ENCODE measurements at regions of chr22 and their contacts with region 1.

Region 1: GRCh38 chr22:36180038-36180880 is 19.7 kb upstream of the APOL3 start:
- DNase-seq: peak; percentile 76 to 94 (median 85)
- ATAC-seq: peak; percentile 100
- H3K4me3 ChIP-seq: no peak overlapping the region
- H3K4me3 Mint-ChIP-seq: no peak overlapping the region
- H3K27ac ChIP-seq: no peak overlapping the region
- H3K27ac Mint-ChIP-seq: no peak overlapping the region
- H3K4me1 ChIP-seq: peaks cover 7% of the 10 kb centered on the region
- H3K4me1 Mint-ChIP-seq: peaks cover 6% of the 10 kb centered on the region
- H3K27me3 ChIP-seq: peaks cover 0 to 2% of the 10 kb centered on the region in 2 experiments
- H3K27me3 Mint-ChIP-seq: no peaks in the 10 kb centered on the region
- CTCF ChIP-seq: peak; percentile 81

Region 2: DNA sequence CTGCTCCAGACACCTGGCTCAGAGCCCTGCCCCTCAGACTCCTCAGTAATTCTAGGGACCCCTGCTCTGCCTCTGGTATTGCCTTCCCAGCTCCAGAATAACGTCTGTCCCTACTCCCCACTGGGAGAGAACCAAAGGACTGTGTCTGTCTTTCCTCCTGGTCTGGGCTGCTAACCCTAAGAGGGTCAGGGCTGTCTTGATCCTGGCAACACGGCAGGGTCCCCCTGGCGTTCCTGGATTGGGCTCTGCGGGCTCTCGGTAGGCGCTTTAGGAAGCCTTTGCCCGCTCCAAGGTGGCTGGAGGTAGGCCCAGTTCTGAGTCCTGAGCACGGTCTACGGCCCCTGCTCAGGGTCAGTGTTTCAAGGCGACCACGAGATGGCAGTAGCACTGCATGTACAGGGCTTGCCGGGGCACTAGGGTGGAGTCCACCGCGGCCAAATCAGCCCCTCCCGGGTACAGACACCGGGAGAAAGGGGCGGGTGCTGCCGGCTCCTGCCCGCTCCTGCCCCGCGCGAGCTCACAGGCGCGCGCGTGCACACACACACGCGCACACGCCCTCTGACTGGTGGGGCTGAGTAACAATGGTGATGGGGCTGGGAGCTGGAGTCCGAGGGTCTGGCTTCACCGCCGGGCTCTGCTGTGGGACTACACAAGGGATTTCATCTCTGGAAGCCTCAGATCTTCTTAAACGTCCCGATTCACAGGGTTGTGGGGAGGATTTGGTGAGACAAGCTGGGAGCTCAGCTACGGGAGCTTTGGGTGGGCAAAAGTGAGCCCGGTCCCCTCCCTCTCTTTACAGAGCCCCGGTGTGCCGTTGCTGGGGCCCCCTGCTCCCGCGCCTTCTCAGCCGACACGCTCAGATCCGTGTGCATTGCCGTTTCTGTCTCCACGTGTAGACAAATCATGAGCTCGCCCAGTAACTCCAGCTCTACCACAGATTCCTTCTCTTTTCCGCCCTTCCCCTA is 829.4 kb before region 1 on chr22:
- CTCF ChIA-PET with region 1: no interaction called
- POLR2A ChIA-PET with region 1: no interaction called
- intact Hi-C with region 1: loop called in 1 of 2 experiments (anchors 2 kb)
- DNase-seq: peak; percentile 69 to 93 (median 79)
- ATAC-seq: peak; percentile 81
- H3K4me3 ChIP-seq: peak overlapping the region; percentile 55
- H3K4me3 Mint-ChIP-seq: peak overlapping the region; percentile 80
- H3K27ac ChIP-seq: no peak overlapping the region
- H3K27ac Mint-ChIP-seq: peak overlapping the region; percentile 43
- H3K4me1 ChIP-seq: peaks cover 31% of the 10 kb centered on the region
- H3K4me1 Mint-ChIP-seq: peaks cover 25% of the 10 kb centered on the region
- H3K27me3 ChIP-seq: no peaks in the 10 kb centered on the region
- H3K27me3 Mint-ChIP-seq: peaks cover 12% of the 10 kb centered on the region
- CTCF ChIP-seq: peak; percentile 84

Region 3: GRCh38 chr22:36065775-36066559 is 114.3 kb before region 1 on chr22:
- CTCF ChIA-PET with region 1: interaction called, 15 read pairs
- POLR2A ChIA-PET with region 1: no interaction called
- intact Hi-C with region 1: loop called (anchors 1 to 2 kb)
- DNase-seq: peak; percentile 34 to 79 (median 52)
- ATAC-seq: peak; percentile 86
- H3K4me3 ChIP-seq: peak overlapping the region; percentile 50
- H3K4me3 Mint-ChIP-seq: peak overlapping the region; percentile 85
- H3K27ac ChIP-seq: no peak overlapping the region
- H3K27ac Mint-ChIP-seq: no peak overlapping the region
- H3K4me1 ChIP-seq: peaks cover 17% of the 10 kb centered on the region
- H3K4me1 Mint-ChIP-seq: peaks cover 5% of the 10 kb centered on the region
- H3K27me3 ChIP-seq: no peaks in the 10 kb centered on the region
- H3K27me3 Mint-ChIP-seq: no peaks in the 10 kb centered on the region
- CTCF ChIP-seq: peak; percentile 100

Region 4: DNA sequence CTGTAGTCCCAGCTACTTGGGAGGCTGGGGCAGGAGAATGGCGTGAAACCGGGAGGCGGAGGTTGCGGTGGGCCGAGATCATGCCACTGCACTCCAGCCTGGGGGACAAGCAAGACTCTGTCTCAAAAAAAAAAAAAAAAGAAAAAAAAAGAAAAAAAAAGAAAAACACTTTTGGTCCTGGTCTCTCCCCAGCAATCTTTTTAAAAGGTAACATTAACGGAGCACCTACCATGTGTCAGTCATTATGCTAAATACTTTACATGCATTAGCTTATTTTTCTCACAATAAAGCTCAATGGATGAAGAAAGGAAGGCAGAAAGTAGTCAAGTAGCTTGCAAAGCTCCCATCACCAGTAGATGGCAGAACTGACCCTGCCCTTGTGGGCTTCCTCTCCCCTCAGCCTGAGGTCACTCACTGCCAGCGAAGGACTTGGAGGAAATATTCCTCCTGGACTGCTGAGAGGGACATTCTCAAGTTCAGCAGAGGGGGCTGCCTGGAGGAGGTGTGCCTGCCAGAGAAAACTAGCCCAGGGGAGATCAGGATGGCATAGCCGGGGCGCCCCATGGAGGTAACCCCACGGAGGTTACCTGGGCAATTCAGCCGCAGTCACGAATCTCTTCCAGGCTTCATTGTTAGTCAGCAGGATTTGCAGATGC is 35.2 kb before region 1 on chr22:
- CTCF ChIA-PET with region 1: interaction called, 8 read pairs
- POLR2A ChIA-PET with region 1: no interaction called
- intact Hi-C with region 1: loop called (anchors 1 kb)
- DNase-seq: peak in 5 of 14 experiments; percentile 34 to 70 (median 47)
- ATAC-seq: peak; percentile 62
- H3K4me3 ChIP-seq: no peak overlapping the region
- H3K4me3 Mint-ChIP-seq: no peak overlapping the region
- H3K27ac ChIP-seq: no peak overlapping the region
- H3K27ac Mint-ChIP-seq: peak overlapping the region; percentile 64
- H3K4me1 ChIP-seq: peaks cover 21% of the 10 kb centered on the region
- H3K4me1 Mint-ChIP-seq: peaks cover 27% of the 10 kb centered on the region
- H3K27me3 ChIP-seq: no peaks in the 10 kb centered on the region
- H3K27me3 Mint-ChIP-seq: no peaks in the 10 kb centered on the region
- CTCF ChIP-seq: peak; percentile 51

Region 5: DNA sequence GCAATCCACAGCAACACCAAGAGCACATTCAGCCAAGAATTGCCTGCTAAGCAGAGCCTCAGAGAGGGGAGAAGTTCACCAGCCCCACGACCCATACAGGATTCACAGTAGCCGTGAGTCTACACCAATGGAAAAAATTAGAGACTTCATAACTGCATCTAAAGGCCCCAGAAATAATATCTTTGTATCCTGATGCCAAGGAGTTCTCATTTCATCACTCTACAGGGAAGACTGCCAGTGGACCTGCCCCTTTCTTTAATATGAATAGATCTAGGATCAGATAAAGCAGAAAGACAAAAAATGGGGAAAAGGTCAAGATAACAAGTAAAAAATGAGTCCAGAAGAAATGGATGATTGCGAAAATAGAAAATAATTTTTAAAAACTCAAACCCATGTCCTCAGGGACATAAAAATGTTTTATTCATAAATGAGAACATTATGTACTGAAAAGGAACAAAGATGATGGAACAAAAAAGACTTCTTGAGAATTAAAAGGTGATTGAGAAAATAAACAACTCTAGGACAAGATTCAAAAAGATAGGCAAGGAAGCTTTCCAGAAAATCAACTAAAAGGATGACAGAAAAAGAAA is 29.2 kb before region 1 on chr22:
- CTCF ChIA-PET with region 1: interaction called, 12 read pairs
- POLR2A ChIA-PET with region 1: no interaction called
- intact Hi-C with region 1: no loop called
- DNase-seq: no peak
- ATAC-seq: no peak
- H3K4me3 ChIP-seq: no peak overlapping the region
- H3K4me3 Mint-ChIP-seq: peak overlapping the region; percentile 8
- H3K27ac ChIP-seq: no peak overlapping the region
- H3K27ac Mint-ChIP-seq: peak overlapping the region; percentile 92
- H3K4me1 ChIP-seq: peaks cover 65% of the 10 kb centered on the region
- H3K4me1 Mint-ChIP-seq: peaks cover 69% of the 10 kb centered on the region
- H3K27me3 ChIP-seq: no peaks in the 10 kb centered on the region
- H3K27me3 Mint-ChIP-seq: no peaks in the 10 kb centered on the region
- CTCF ChIP-seq: no peak

Region 6: GRCh38 chr22:36156515-36157419 is 23.5 kb before region 1 on chr22:
- CTCF ChIA-PET with region 1: interaction called, 12 read pairs
- POLR2A ChIA-PET with region 1: interaction called, 5 read pairs
- intact Hi-C with region 1: loop called in 1 of 2 experiments (anchors 1 kb)
- DNase-seq: peak; percentile 51 to 92 (median 72)
- ATAC-seq: peak; percentile 68
- H3K4me3 ChIP-seq: peak overlapping the region; percentile 96
- H3K4me3 Mint-ChIP-seq: peak overlapping the region; percentile 94
- H3K27ac ChIP-seq: peak overlapping the region; percentile 90 to 94
- H3K27ac Mint-ChIP-seq: peak overlapping the region; percentile 92
- H3K4me1 ChIP-seq: peaks cover 83% of the 10 kb centered on the region
- H3K4me1 Mint-ChIP-seq: peaks cover 99% of the 10 kb centered on the region
- H3K27me3 ChIP-seq: no peaks in the 10 kb centered on the region
- H3K27me3 Mint-ChIP-seq: no peaks in the 10 kb centered on the region
- CTCF ChIP-seq: no peak

Region 7: DNA sequence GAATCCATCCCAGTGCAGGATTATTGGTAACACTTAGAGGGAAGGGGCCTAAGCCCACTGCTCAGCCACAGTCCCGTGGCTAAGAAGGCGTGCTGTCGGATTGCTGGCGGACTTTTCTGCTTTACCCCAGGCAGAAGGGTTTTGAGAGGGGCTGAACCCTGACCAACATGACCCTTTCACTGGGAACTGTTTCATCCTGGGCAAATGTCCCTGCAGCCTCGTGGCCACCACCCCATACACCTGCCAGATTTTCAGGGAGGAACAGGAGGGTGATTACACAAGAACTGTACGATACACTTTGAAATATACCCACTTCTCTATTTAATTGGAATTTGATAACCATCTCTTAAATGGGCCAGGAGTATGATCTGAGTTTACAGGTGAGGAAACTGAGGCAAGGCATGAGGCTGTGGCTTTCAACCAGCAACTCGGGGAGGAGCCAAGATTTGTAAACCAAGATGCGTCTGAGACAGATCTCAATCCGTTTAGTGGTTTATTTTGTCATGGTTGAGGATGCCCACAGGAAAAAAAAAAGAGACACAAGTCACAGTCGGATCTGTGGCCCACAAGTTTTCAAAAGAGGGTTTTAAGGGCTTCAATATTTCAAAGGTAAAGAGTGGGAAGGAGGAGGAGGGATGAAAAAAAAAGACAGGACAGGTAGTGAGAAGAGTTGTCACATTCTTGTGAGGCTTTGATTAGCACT is 13.6 kb before region 1 on chr22:
- CTCF ChIA-PET with region 1: interaction called, 11 read pairs
- POLR2A ChIA-PET with region 1: interaction called, 5 read pairs
- intact Hi-C with region 1: no loop called
- DNase-seq: peak in 3 of 14 experiments; percentile 32 to 86 (median 33)
- ATAC-seq: peak; percentile 20
- H3K4me3 ChIP-seq: no peak overlapping the region
- H3K4me3 Mint-ChIP-seq: no peak overlapping the region
- H3K27ac ChIP-seq: peak overlapping the region in 1 of 2 donors; percentile 5
- H3K27ac Mint-ChIP-seq: peak overlapping the region; percentile 38
- H3K4me1 ChIP-seq: peaks cover 43% of the 10 kb centered on the region
- H3K4me1 Mint-ChIP-seq: peaks cover 33% of the 10 kb centered on the region
- H3K27me3 ChIP-seq: no peaks in the 10 kb centered on the region
- H3K27me3 Mint-ChIP-seq: no peaks in the 10 kb centered on the region
- CTCF ChIP-seq: no peak